A549 (cell line): ENCODE measurements at regions of chr3 and their contacts with region 1.

Region 1: DNA sequence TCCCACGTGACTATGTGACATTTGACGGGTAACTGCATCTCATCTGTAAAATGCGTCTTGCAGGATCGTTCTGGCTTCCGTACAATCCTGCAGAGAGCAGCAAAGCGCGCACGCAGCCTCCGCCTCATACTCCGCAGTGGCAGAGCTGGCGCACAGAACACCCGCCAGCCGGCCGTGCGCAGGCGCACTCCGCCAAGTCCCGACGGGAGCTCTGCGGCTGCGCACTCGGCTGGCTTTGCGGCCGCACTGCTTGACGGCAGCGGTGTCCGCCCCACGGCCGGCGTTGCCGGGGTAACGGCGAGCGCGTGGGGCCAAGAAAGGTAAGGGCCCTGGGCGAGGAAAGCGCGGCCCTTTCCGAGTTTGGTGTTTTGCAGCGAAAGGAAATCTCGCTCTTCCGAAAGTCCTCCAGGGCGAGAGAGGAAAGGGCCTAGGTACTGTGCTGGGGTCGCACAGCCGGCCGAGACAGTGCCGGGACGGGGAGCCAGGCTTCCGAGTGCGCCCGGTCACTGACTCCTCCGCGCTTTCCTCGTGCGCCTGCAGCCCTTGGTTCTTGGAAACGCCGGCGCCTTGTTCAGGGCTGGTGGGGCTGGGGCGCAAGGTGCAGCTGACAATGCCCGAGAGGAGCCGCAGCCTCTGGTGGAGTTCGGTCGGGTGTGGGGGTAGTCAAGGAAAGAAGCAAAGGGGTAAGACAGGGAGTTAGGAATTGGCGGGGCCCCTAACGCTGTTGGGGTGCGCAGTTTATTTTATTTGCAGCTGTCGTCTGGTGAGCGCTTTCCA is at the start of gene TSEN2:
- DNase-seq: peak; percentile 92 to 95
- ATAC-seq: peak; percentile 87 to 96
- H3K4me3 ChIP-seq: peak within 1 kb of the TSS; percentile 81
- H3K27ac ChIP-seq: peak within 1 kb of the TSS; percentile 88 to 93
- H3K4me1 ChIP-seq: peaks cover 25% of the 10 kb centered on the region
- CTCF ChIP-seq: no peak
- EP300 ChIP-seq: no peak
- POLR2A ChIP-seq: peak; percentile 95
- RAD21 ChIP-seq: peak in 1 of 2 experiments; percentile 22; a peak in 1 of 5 replicates
- polyA plus RNA-seq, gene TSEN2: 29.8 and 33.1 TPM in 2 replicates

Region 2: GRCh38 chr3:12073106-12073505 is 411.3 kb before region 1 on chr3:
- CTCF ChIA-PET with region 1: no interaction called
- POLR2A ChIA-PET with region 1: no interaction called
- DNase-seq: no peak
- ATAC-seq: no peak
- H3K4me3 ChIP-seq: no peak overlapping the region
- H3K27ac ChIP-seq: no peak overlapping the region
- H3K4me1 ChIP-seq: no peaks in the 10 kb centered on the region
- CTCF ChIP-seq: no peak
- EP300 ChIP-seq: no peak
- POLR2A ChIP-seq: no peak
- RAD21 ChIP-seq: no peak

Region 3: DNA sequence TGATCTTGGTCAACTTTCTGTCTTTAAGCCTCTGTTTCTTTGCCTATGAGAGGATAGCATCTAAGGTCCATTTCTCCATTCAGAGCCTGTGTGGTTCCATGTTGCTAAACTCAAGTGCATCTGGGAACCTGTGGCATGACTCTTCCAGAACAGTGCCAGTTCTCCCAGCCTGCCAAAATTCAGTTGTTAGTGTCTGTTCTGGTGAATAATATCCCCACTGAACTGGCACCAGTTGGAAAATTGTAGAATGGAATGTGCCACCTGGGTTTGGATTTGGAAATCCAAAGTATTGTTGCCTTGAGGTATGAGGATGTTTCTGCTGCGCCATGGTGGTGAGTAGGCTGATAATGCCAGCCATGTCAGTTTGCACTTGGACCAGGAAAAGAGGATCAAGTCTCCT is 357.0 kb before region 1 on chr3:
- CTCF ChIA-PET with region 1: interaction called, 342 read pairs
- POLR2A ChIA-PET with region 1: no interaction called
- DNase-seq: no peak
- ATAC-seq: no peak
- H3K4me3 ChIP-seq: no peak overlapping the region
- H3K27ac ChIP-seq: no peak overlapping the region
- H3K4me1 ChIP-seq: no peaks in the 10 kb centered on the region
- CTCF ChIP-seq: no peak
- EP300 ChIP-seq: no peak
- POLR2A ChIP-seq: no peak
- RAD21 ChIP-seq: no peak

Region 4: GRCh38 chr3:12182687-12183441 is 301.5 kb before region 1 on chr3:
- CTCF ChIA-PET with region 1: interaction called, 85 read pairs
- POLR2A ChIA-PET with region 1: interaction called, 3 read pairs
- DNase-seq: no peak
- ATAC-seq: no peak; a peak in 1 of 6 replicates
- H3K4me3 ChIP-seq: no peak overlapping the region
- H3K27ac ChIP-seq: peak overlapping the region in 1 of 2 experiments; percentile 36; a peak in 1 of 6 replicates
- H3K4me1 ChIP-seq: peaks cover 23% of the 10 kb centered on the region
- CTCF ChIP-seq: no peak
- EP300 ChIP-seq: no peak
- POLR2A ChIP-seq: no peak
- RAD21 ChIP-seq: no peak

Region 5: GRCh38 chr3:12287727-12288191 is 196.6 kb before region 1 on chr3:
- CTCF ChIA-PET with region 1: interaction called, 27 read pairs
- POLR2A ChIA-PET with region 1: interaction called, 4 read pairs
- DNase-seq: peak in 1 of 2 experiments; percentile 53
- ATAC-seq: peak; percentile 79 to 83
- H3K4me3 ChIP-seq: peak overlapping the region; percentile 96
- H3K27ac ChIP-seq: peak overlapping the region; percentile 97 to 100
- H3K4me1 ChIP-seq: peaks cover 30% of the 10 kb centered on the region
- CTCF ChIP-seq: no peak; the same call in 2 of the 3 replicates
- EP300 ChIP-seq: no peak
- POLR2A ChIP-seq: no peak
- RAD21 ChIP-seq: peak in 1 of 2 experiments; percentile 55; a peak in 3 of 5 replicates

Region 6: DNA sequence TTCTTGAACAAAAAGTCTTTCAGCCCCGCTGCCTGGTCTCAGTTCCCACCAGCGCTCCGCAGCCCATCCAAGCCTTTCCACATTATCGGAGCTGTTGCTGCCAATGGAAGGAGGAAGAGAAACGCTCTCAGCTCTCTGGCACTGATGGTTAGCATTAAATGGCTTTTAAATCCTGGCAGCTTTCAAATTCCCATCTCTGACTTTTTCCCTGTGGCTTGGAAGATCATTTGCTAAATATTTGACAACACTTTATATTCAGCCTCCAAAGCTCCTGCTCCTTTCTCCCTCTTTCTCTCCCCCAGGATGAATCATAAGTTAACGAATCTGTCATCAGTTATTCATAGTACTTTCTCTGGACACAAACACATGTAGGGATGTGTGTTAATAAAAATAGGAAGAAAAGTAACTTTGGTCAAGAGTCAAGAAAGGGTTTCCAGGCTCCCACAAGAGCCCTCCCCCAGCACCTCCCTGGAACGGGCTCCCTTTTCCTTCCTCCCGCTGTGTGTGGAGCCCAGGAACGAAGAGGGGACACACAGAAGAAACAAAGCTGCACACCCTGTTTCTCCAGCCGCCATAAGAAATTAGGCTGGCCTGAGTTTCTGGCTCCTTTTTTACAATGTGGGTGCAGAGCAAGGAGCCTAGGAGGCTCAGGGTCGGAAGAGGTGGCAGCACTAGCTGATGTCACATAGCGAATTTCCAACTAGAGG is 47.7 kb before region 1 on chr3:
- CTCF ChIA-PET with region 1: interaction called, 13 read pairs
- POLR2A ChIA-PET with region 1: no interaction called
- DNase-seq: no peak
- ATAC-seq: no peak
- H3K4me3 ChIP-seq: no peak overlapping the region
- H3K27ac ChIP-seq: no peak overlapping the region
- H3K4me1 ChIP-seq: no peaks in the 10 kb centered on the region
- CTCF ChIP-seq: no peak
- EP300 ChIP-seq: no peak
- POLR2A ChIP-seq: no peak
- RAD21 ChIP-seq: no peak

Region 7: GRCh38 chr3:12471243-12471651 is 13.1 kb before region 1 on chr3:
- CTCF ChIA-PET with region 1: interaction called, 39 read pairs
- POLR2A ChIA-PET with region 1: interaction called, 4 read pairs
- DNase-seq: peak; percentile 69 to 82
- ATAC-seq: peak; percentile 89 to 95
- H3K4me3 ChIP-seq: no peak overlapping the region
- H3K27ac ChIP-seq: peak overlapping the region; percentile 73 to 84
- H3K4me1 ChIP-seq: peaks cover 32% of the 10 kb centered on the region
- CTCF ChIP-seq: peak; percentile 32; the same call in 1 of the 3 replicates
- EP300 ChIP-seq: 0 out of 5 replicates have a peak, but pooled peaks of 1 of the 2 experiments have one; percentile 17
- POLR2A ChIP-seq: no peak
- RAD21 ChIP-seq: peak; percentile 61 to 62